ENCODE measurements at regions of chr12 and their contacts with region 1.

Region 1: DNA sequence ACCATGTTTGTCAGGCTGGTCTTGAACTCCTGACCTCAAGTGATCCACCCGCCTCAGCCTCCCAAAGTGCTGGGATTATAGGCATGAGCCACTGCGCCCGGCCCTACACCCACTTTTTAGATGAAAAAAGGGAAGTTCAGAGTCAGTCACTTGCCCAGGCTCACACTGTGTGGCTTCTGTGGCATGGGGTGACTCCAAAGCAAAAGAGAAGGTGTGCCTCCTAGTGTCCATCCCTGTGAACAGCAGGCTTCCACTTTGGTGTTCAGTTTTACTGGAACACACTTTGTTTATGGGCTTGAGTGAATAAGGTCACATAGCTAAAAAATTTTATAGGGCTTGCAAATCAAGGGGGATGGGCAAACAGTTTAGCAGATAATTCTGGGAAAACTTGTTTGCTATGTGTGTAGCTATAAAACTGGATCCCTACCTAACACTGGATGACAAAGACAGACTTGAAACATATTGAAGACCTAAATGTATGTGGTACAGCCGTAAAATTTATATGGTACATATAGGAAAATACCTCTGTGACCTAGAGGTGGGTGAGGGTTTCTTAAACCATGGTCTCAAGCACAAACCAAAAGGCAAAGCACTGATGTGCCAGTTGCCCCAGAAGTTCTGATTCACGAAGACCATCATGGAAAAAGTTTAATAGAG is 54.9 kb downstream of the EID3 start:
- DNase-seq: peak; percentile 57 to 60
- H3K4me3 ChIP-seq: no peak overlapping the region
- H3K27ac ChIP-seq: no peak overlapping the region
- H3K4me1 ChIP-seq: no peaks in the 10 kb centered on the region
- H3K27me3 ChIP-seq: no peaks in the 10 kb centered on the region
- CTCF ChIP-seq: peak; percentile 70 to 88 (median 83)
- POLR2A ChIP-seq: no peak

Region 2: GRCh38 chr12:104201238-104202001 is 157.1 kb before region 1 on chr12:
- intact Hi-C with region 1: loop called (anchors 5 kb)
- DNase-seq: peak; percentile 23 to 32
- H3K4me3 ChIP-seq: no peak overlapping the region
- H3K27ac ChIP-seq: no peak overlapping the region
- H3K4me1 ChIP-seq: no peaks in the 10 kb centered on the region
- H3K27me3 ChIP-seq: no peaks in the 10 kb centered on the region
- CTCF ChIP-seq: peak in 5 of 6 experiments; percentile 44 to 91 (median 82)
- POLR2A ChIP-seq: no peak